ENCODE measurements at regions of chr2 and their contacts with region 1.

Region 1: GRCh38 chr2:217713395-217714286 is 289.2 kb downstream of the TNS1 start:
- DNase-seq: peak; percentile 81
- H3K4me3 ChIP-seq: no peak overlapping the region
- H3K27ac ChIP-seq: peak overlapping the region; percentile 37; the same call in 1 of the 2 replicates
- H3K4me1 ChIP-seq: peaks cover 45% of the 10 kb centered on the region
- H3K27me3 ChIP-seq: no peaks in the 10 kb centered on the region

Region 2: GRCh38 chr2:217510771-217511291 is 202.8 kb before region 1 on chr2:
- in situ Hi-C with region 1: loop called (anchors 10 kb)
- DNase-seq: peak; percentile 91
- H3K4me3 ChIP-seq: no peak overlapping the region
- H3K27ac ChIP-seq: no peak overlapping the region
- H3K4me1 ChIP-seq: peaks cover 14% of the 10 kb centered on the region
- H3K27me3 ChIP-seq: no peaks in the 10 kb centered on the region

Measured in GM23248 (cell line).